GM10248 (cell line): ENCODE measurements at regions of chr3 and their contacts with region 1.

Region 1: GRCh38 chr3:72938471-72939265 is 50.8 kb downstream of the GXYLT2 start:
- DNase-seq: peak; percentile 69
- CTCF ChIP-seq: peak; percentile 22

Region 2: DNA sequence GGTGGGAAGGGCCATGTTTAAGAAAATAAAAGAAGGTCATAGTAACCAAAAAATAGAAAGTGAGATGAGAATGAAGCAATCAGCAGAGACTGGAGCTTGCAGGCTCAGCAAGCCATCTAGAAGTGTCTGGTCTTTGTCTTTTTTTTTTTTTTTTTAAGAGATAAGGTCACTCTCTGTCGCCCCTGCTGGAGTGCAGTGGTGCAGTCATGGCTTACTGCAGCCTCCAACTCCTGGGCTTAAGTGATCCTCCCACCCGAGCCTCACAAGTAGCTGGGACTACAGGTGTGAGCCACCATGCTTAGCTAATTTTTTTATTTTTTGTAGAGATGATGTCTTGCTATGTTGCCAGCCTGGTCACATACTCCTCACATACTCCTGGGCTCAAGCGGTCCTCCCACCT is 14.6 kb before region 1 on chr3:
- CTCF ChIA-PET with region 1: interaction called, 14 read pairs
- POLR2A ChIA-PET with region 1: no interaction called
- DNase-seq: no peak
- CTCF ChIP-seq: no peak

Region 3: GRCh38 chr3:72964633-72965032 is 26.0 kb after region 1 on chr3:
- CTCF ChIA-PET with region 1: no interaction called
- POLR2A ChIA-PET with region 1: no interaction called
- DNase-seq: no peak
- CTCF ChIP-seq: no peak